ENCODE measurements at regions of chr10 and their contacts with region 1.

Region 1: GRCh38 chr10:20726381-20726780 is 170.7 kb downstream of the NEBL start:
- DNase-seq: no peak
- ATAC-seq: no peak
- H3K4me3 Mint-ChIP-seq: no peak overlapping the region
- H3K27ac Mint-ChIP-seq: no peak overlapping the region
- H3K4me1 Mint-ChIP-seq: no peaks in the 10 kb centered on the region
- H3K27me3 Mint-ChIP-seq: no peaks in the 10 kb centered on the region
- CTCF ChIP-seq: no peak

Region 2: DNA sequence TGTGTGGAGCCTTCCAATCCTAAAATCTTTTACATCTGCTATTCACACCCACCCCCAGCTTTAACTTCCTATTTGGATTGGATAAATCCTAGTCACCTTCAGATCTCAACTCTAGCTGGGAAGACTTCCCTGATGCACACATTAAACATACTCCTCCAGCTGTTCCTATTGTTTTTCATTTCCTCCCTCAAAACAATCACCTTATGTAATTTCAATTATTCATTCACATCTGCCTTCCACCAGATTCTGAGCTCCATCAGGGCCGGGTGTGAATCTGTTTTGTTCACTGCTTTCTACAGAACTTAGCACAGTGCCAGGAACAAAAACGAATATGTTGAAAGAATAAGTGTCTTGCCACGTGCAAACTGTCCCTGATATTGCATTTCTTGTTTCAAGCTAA is 412.7 kb before region 1 on chr10:
- CTCF ChIA-PET with region 1: no interaction called
- POLR2A ChIA-PET with region 1: no interaction called
- intact Hi-C with region 1: no loop called
- DNase-seq: no peak
- ATAC-seq: no peak
- H3K4me3 Mint-ChIP-seq: no peak overlapping the region
- H3K27ac Mint-ChIP-seq: no peak overlapping the region
- H3K4me1 Mint-ChIP-seq: no peaks in the 10 kb centered on the region
- H3K27me3 Mint-ChIP-seq: no peaks in the 10 kb centered on the region
- CTCF ChIP-seq: no peak

Region 3: GRCh38 chr10:20659225-20659624 is 67.2 kb before region 1 on chr10:
- CTCF ChIA-PET with region 1: no interaction called
- POLR2A ChIA-PET with region 1: no interaction called
- intact Hi-C with region 1: loop called (anchors 2 kb)
- DNase-seq: no peak
- ATAC-seq: no peak
- H3K4me3 Mint-ChIP-seq: no peak overlapping the region
- H3K27ac Mint-ChIP-seq: no peak overlapping the region
- H3K4me1 Mint-ChIP-seq: no peaks in the 10 kb centered on the region
- H3K27me3 Mint-ChIP-seq: no peaks in the 10 kb centered on the region
- CTCF ChIP-seq: no peak

Region 4: GRCh38 chr10:20956843-20957242 is 230.5 kb after region 1 on chr10:
- CTCF ChIA-PET with region 1: no interaction called
- POLR2A ChIA-PET with region 1: no interaction called
- intact Hi-C with region 1: no loop called
- DNase-seq: no peak
- ATAC-seq: no peak
- H3K4me3 Mint-ChIP-seq: no peak overlapping the region
- H3K27ac Mint-ChIP-seq: no peak overlapping the region
- H3K4me1 Mint-ChIP-seq: no peaks in the 10 kb centered on the region
- H3K27me3 Mint-ChIP-seq: peaks cover 4% of the 10 kb centered on the region
- CTCF ChIP-seq: no peak

Measured in activated B cell treated with CpG ODN at 0.5 μM for 24 hours (primary cell).